ENCODE measurements at regions of chr11 and their contacts with region 1.

Region 1: DNA sequence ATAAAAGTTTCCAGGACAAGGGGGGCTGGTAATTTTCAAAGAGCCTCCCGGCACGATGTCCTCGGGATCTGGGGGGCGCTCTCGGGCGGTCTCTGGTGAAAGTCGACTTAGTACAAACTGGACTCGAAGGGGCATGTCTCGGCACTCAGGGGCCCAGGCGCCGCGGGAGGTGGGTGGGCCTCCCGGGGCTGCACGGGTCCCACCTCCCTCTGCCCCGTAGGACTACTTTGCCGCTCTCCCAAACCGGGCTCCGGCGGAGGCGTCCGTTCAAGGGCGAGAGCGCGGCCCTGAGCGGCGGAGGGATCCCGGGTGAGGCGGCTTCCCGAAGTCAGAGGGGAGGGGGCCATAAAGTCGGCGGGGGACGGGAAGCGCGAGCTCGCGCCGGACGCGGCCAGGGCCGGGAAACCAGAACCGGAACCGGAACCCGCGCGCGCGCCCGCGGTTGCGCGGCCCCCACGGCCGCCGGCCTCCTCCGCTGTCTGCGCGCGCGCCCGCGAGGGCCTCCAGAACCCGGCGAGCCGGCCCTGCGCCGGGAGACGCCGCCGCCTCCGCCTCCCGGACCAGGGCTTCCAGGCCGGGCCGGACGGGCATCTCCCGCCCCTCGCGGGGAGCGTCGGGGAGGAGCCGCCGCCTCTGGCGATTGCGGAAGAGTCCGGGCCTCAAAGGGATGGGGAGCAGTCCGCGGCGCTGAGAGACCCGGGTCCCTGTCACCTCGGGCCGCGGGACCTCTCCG is at the start of gene ARHGEF12:
- DNase-seq: peak; percentile 95 to 96
- H3K4me3 ChIP-seq: peak within 1 kb of the TSS; percentile 58 to 92 (median 65)
- H3K27ac ChIP-seq: peak within 1 kb of the TSS; percentile 90 to 99 (median 93)
- H3K4me1 ChIP-seq: peaks cover 28 to 35% of the 10 kb centered on the region in 2 donors
- H3K27me3 ChIP-seq: no peaks in the 10 kb centered on the region
- CTCF ChIP-seq: peak in 3 of 6 experiments; percentile 14 to 32 (median 18)
- POLR2A ChIP-seq: peak; percentile 75 to 93
- total RNA-seq, gene ARHGEF12: 169 to 268 (median 197) TPM

Region 2: GRCh38 chr11:120128782-120129172 is 207.3 kb before region 1 on chr11:
- intact Hi-C with region 1: no loop called
- DNase-seq: no peak
- H3K4me3 ChIP-seq: no peak overlapping the region
- H3K27ac ChIP-seq: no peak overlapping the region
- H3K4me1 ChIP-seq: peaks cover 0 to 3% of the 10 kb centered on the region in 2 donors
- H3K27me3 ChIP-seq: no peaks in the 10 kb centered on the region
- CTCF ChIP-seq: no peak
- POLR2A ChIP-seq: no peak

Region 3: GRCh38 chr11:120375076-120375475 is 39.0 kb after region 1 on chr11:
- intact Hi-C with region 1: no loop called
- DNase-seq: no peak
- H3K4me3 ChIP-seq: no peak overlapping the region
- H3K27ac ChIP-seq: no peak overlapping the region
- H3K4me1 ChIP-seq: peaks cover 5 to 7% of the 10 kb centered on the region in 2 donors
- H3K27me3 ChIP-seq: no peaks in the 10 kb centered on the region
- CTCF ChIP-seq: no peak
- POLR2A ChIP-seq: no peak

Region 4: DNA sequence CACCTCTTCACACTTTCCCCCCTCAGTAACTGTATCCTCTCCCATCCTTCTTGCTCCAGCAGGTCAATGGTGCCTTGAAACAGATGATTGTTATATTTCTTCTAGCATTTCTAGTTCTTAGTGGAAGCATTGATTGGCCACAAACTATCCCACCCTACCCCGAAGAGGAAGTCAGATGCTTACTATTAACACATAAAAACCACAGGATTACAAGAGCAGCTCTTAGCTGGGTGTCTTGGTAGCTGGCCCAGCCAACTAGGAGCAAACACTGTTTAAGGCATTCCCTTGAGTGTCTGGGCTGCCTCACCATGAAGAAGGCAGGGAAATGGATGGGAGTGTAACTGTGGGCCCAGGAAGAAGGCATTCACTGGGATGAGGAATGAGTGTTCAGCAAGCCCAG is 352.1 kb after region 1 on chr11:
- intact Hi-C with region 1: loop called (anchors 5 kb)
- DNase-seq: no peak
- H3K4me3 ChIP-seq: no peak overlapping the region
- H3K27ac ChIP-seq: no peak overlapping the region
- H3K4me1 ChIP-seq: no peaks in the 10 kb centered on the region
- H3K27me3 ChIP-seq: no peaks in the 10 kb centered on the region
- CTCF ChIP-seq: no peak
- POLR2A ChIP-seq: no peak